Mammary epithelial cell (primary cell): ENCODE measurements at regions of chr9 and their contacts with region 1.

Region 1: DNA sequence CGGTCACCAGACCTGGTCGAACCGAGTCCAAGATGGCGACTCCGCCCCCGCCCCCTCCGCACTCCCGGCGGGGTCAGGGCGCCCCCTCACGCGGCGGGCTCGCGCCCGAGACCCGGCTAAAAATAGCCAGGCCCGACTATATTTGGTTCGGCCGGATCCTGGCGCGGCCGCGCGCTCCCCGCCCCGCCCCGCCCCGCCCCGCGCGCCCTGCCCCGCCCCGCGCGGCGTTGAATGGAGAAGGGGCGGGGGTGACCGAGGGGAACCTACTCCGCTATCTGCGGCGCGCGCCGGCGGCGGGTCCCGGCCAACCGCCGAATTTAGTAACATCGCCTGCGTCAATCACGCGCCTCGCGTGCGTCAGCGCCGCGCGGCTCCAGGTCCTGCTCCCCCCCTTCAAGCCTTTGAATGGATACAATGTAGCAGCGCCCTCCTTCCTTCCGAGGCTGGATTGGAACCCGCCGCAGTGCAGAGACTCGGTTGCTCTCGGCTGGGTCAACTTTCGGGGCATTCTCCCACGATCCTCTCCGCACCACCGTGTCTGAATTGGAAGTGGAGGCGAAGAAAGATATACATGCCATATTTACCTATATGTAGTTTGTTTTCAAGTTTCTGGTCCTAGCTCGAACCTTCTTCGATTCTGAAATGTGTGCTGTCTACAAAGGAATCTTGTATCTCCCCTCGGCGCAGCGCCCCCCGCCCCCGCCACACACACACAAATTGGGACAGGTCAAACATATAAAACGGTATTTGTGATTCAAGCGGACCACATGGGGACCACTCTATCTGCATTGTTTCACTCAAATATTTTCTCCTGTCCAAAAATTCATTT is 1.6 kb upstream of the NR4A3 start:
- DNase-seq: peak; percentile 91
- H3K4me3 ChIP-seq: peak overlapping the region; percentile 87 to 92 (median 92)
- H3K27ac ChIP-seq: peak overlapping the region; percentile 83
- H3K4me1 ChIP-seq: peaks cover 37% of the 10 kb centered on the region
- H3K27me3 ChIP-seq: peaks cover 12% of the 10 kb centered on the region
- CTCF ChIP-seq: peak in 1 of 2 donors; percentile 12

Region 2: GRCh38 chr9:99433555-99433954 is 386.5 kb before region 1 on chr9:
- CTCF ChIA-PET with region 1: no interaction called
- dilution Hi-C with region 1: no loop called
- in situ Hi-C with region 1: no loop called
- intact Hi-C with region 1: loop called (anchors 10 kb)
- DNase-seq: peak; percentile 83
- H3K4me3 ChIP-seq: no peak overlapping the region
- H3K27ac ChIP-seq: peak overlapping the region; percentile 14
- H3K4me1 ChIP-seq: peaks cover 16% of the 10 kb centered on the region
- H3K27me3 ChIP-seq: no peaks in the 10 kb centered on the region
- CTCF ChIP-seq: no peak

Region 3: DNA sequence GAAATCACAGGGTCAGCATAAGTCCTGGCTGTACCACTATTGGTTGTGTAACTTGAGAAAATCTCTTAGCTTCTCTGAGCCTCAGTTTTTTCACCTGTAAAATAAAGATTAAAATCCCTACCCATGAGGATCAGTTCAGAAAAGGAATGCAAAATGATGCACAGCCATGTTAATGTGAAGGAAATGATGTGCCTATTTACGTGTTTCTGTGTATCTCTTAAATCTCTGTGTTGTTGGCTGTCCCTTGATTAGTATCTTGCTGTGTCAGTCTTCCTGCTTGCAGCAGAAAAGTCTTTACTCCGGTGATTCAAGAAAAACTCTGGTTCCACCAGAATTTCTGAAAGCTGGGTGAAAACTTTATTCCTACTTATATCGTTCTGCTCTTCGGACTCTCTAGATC is 22.7 kb after region 1 on chr9:
- CTCF ChIA-PET with region 1: no interaction called
- dilution Hi-C with region 1: no loop called
- in situ Hi-C with region 1: no loop called
- intact Hi-C with region 1: no loop called
- DNase-seq: no peak
- H3K4me3 ChIP-seq: no peak overlapping the region
- H3K27ac ChIP-seq: no peak overlapping the region
- H3K4me1 ChIP-seq: no peaks in the 10 kb centered on the region
- H3K27me3 ChIP-seq: peaks cover 2% of the 10 kb centered on the region
- CTCF ChIP-seq: no peak

Region 4: GRCh38 chr9:99855467-99856181 is 35.6 kb after region 1 on chr9:
- CTCF ChIA-PET with region 1: no interaction called
- dilution Hi-C with region 1: no loop called
- in situ Hi-C with region 1: no loop called
- intact Hi-C with region 1: no loop called
- DNase-seq: no peak
- H3K4me3 ChIP-seq: no peak overlapping the region
- H3K27ac ChIP-seq: no peak overlapping the region
- H3K4me1 ChIP-seq: no peaks in the 10 kb centered on the region
- H3K27me3 ChIP-seq: no peaks in the 10 kb centered on the region
- CTCF ChIP-seq: peak; percentile 6 to 18

Region 5: DNA sequence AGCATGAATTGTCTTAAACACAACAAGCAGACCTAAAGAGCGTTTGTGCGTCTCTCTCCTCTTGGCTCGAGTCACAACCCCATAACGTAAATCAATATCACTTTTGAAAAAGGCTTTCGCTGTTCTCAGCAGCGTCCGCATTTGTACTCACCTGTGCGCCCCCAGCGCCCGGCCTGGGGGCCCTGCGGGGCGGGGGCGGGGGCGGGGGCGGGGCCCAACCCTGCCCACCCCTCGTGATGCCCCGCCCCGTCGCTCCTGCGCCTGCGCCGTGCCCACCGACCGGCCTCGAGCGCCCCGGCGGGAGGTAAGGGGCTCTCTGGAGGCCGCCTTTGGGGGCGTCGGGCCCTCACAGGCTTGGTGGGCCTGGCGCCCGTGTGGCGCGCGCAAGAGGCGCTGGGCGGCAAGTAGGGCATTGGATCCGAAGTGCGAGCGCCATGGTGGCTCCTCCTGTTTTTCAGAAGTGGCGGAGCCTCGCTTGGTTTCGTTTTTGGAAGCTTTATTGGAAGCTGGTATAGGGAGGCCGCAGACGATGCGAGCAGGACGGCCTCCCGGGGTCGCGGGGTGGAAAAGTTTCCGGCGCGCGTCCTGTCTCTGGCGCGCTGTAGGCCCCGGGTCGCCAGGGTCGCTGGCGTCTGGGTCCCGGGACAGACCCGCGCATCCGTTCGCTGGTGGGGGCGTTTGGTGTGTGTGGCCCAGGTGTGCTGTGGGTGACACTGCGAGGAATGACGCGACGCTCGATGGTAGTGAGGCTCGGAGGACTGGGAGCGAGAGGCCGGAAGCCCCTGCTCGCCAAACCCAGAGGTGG is 86.5 kb after region 1 on chr9 and contains the start of gene STX17:
- CTCF ChIA-PET with region 1: interaction called, 4 read pairs
- dilution Hi-C with region 1: no loop called
- in situ Hi-C with region 1: loop called in 1 of 2 experiments (anchors 25 kb)
- intact Hi-C with region 1: loop called (anchors 2 kb)
- DNase-seq: peak; percentile 82
- H3K4me3 ChIP-seq: peak within 1 kb of the TSS; percentile 89 to 96 (median 92)
- H3K27ac ChIP-seq: peak within 1 kb of the TSS; percentile 78
- H3K4me1 ChIP-seq: peaks cover 12% of the 10 kb centered on the region
- H3K27me3 ChIP-seq: no peaks in the 10 kb centered on the region
- CTCF ChIP-seq: no peak
- total RNA-seq, gene STX17: 22.0 to 32.1 TPM

Region 6: DNA sequence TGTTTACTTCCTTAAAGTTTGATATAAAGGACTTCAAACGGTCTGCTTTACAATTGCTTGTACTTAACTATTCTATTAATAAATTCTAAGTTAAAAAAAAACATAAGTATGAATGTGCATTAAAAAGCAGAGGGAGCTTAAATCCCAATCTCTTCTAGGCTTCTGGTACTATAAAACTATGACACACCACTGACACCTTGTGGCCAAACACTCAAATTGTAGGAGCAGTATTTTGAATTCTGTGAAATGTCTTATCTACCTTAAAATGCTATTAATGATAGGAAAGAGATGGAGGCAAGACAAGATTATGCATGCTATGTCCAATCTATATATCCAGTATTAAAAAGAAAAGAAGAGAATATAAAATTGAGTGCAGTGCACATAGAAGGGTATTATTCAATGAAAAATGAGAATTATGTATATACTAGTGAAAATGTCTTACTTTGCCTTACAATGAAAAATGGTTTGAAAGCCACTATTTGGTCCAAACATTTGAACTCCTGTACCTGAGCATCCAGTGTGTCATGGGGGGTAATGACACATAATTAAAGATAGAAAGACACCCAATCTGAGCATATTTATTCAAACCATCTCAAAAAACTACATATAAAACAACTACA is 191.1 kb after region 1 on chr9:
- CTCF ChIA-PET with region 1: no interaction called
- dilution Hi-C with region 1: no loop called
- in situ Hi-C with region 1: no loop called
- intact Hi-C with region 1: loop called (anchors 5 kb)
- DNase-seq: peak; percentile 29
- H3K4me3 ChIP-seq: no peak overlapping the region
- H3K27ac ChIP-seq: no peak overlapping the region
- H3K4me1 ChIP-seq: no peaks in the 10 kb centered on the region
- H3K27me3 ChIP-seq: no peaks in the 10 kb centered on the region
- CTCF ChIP-seq: peak; percentile 60 to 69

Region 7: GRCh38 chr9:100322954-100323536 is 503.0 kb after region 1 on chr9:
- CTCF ChIA-PET with region 1: no interaction called
- dilution Hi-C with region 1: no loop called
- in situ Hi-C with region 1: loop called in 1 of 2 experiments (anchors 25 kb)
- intact Hi-C with region 1: no loop called
- DNase-seq: peak; percentile 20
- H3K4me3 ChIP-seq: no peak overlapping the region
- H3K27ac ChIP-seq: no peak overlapping the region
- H3K4me1 ChIP-seq: peaks cover 3% of the 10 kb centered on the region
- H3K27me3 ChIP-seq: no peaks in the 10 kb centered on the region
- CTCF ChIP-seq: peak; percentile 59 to 63